Activated T-helper 2 cell treated with anti-CD3 and anti-CD28 coated beads, Interferon-gamma antibody, Interleukin-2, Interleukin-4, amounts not matched to agents 10 μg/mL and 5 μg/mL and 100 μg/mL, durations not matched to agents 14 hours and 24 hours and 36 hours (primary cell): ENCODE measurements at regions of chr12 and their contacts with region 1.

Region 1: DNA sequence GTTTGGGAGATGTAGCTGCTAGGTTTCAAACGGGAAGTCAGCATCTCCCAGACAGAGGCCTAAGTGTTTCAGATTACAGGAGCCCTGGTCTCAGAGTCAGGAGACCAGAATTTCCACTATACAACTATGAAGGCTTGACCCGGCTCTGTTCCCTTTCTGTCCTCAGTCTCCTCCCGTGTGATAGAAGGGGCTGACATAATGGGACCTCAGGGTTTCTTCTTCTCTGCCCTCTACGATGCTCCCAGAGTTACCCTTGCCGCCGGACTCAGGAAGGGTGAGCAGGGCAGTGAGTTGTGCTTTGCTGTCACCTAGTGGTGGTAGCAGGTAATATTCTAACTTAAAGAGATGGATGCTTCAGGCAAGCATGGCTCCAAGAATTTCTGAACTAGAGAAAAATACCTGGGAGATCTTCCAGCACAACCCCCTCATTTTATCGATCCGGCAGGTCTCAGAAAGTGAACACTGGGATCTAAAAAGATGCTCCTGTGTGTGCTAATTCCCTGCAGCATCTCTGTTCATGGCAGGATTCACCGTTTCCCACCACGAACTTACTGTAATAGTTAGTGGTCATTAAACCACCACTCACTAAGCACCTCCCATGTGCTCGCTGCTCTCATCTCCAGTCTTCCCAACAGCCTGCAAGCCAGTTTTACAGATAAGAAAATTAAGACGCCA is 84.4 kb downstream of the VWF start:
- DNase-seq: peak; percentile 22
- H3K4me3 Mint-ChIP-seq: no peak overlapping the region
- H3K27ac Mint-ChIP-seq: no peak overlapping the region
- H3K4me1 Mint-ChIP-seq: peaks cover 3% of the 10 kb centered on the region
- H3K27me3 Mint-ChIP-seq: no peaks in the 10 kb centered on the region

Region 2: DNA sequence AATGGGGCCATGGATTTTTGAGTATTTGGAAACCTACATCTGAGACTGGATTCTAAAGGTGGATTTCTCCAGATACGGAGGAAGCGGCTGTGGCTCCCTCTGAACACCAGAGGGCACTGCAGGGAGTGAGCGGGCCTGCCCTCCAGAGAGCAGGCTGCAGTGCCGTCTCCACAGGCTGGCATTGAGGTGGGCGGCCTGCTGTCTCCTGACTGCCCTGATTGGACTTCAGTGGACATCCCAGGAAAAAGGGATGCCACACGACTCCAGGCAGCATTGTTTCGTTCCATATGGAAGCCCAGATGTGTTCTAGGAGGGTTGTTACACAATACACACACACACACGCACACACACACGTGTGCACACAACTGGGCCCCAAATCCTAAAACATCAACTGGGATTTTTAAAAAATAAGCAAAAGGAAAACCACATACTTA is 74.1 kb before region 1 on chr12:
- intact Hi-C with region 1: loop called (anchors 1 kb)
- DNase-seq: peak; percentile 14
- H3K4me3 Mint-ChIP-seq: no peak overlapping the region
- H3K27ac Mint-ChIP-seq: no peak overlapping the region
- H3K4me1 Mint-ChIP-seq: no peaks in the 10 kb centered on the region
- H3K27me3 Mint-ChIP-seq: peaks cover 2% of the 10 kb centered on the region

Region 3: GRCh38 chr12:5988659-5989116 is 51.3 kb before region 1 on chr12:
- intact Hi-C with region 1: loop called (anchors 1 kb)
- DNase-seq: peak; percentile 53
- H3K4me3 Mint-ChIP-seq: no peak overlapping the region
- H3K27ac Mint-ChIP-seq: no peak overlapping the region
- H3K4me1 Mint-ChIP-seq: no peaks in the 10 kb centered on the region
- H3K27me3 Mint-ChIP-seq: peaks cover 3% of the 10 kb centered on the region